HepG2 (cell line): ENCODE measurements at regions of chr7 and their contacts with region 1.

Region 1: GRCh38 chr7:157165987-157166386 is 27.3 kb downstream of the UBE3C start:
- DNase-seq: no peak
- ATAC-seq: no peak
- H3K4me3 ChIP-seq: no peak overlapping the region
- H3K27ac ChIP-seq: no peak overlapping the region
- H3K4me1 ChIP-seq: no peaks in the 10 kb centered on the region
- H3K27me3 ChIP-seq: no peaks in the 10 kb centered on the region
- CTCF ChIP-seq: no peak
- EP300 ChIP-seq: no peak
- POLR2A ChIP-seq: no peak
- RAD21 ChIP-seq: no peak

Region 2: GRCh38 chr7:157372235-157373232 is 206.5 kb after region 1 on chr7:
- CTCF ChIA-PET with region 1: no interaction called
- POLR2A ChIA-PET with region 1: no interaction called
- in situ Hi-C with region 1: no loop called
- intact Hi-C with region 1: loop called (anchors 5 kb)
- DNase-seq: no peak
- ATAC-seq: no peak; the same call in 2 of the 3 replicates
- H3K4me3 ChIP-seq: no peak overlapping the region
- H3K27ac ChIP-seq: no peak overlapping the region
- H3K4me1 ChIP-seq: no peaks in the 10 kb centered on the region
- H3K27me3 ChIP-seq: no peaks in the 10 kb centered on the region
- CTCF ChIP-seq: no peak
- EP300 ChIP-seq: no peak
- POLR2A ChIP-seq: no peak
- RAD21 ChIP-seq: no peak

Region 3: GRCh38 chr7:157760004-157760730 is 594.2 kb after region 1 on chr7:
- CTCF ChIA-PET with region 1: no interaction called
- POLR2A ChIA-PET with region 1: no interaction called
- in situ Hi-C with region 1: no loop called
- intact Hi-C with region 1: no loop called
- DNase-seq: no peak
- ATAC-seq: peak; percentile 53; the same call in 2 of the 3 replicates
- H3K4me3 ChIP-seq: no peak overlapping the region
- H3K27ac ChIP-seq: no peak overlapping the region
- H3K4me1 ChIP-seq: no peaks in the 10 kb centered on the region
- H3K27me3 ChIP-seq: no peaks in the 10 kb centered on the region; a peak in 1 of 5 replicates
- CTCF ChIP-seq: no peak; the same call in 1 of the 2 replicates
- EP300 ChIP-seq: no peak
- POLR2A ChIP-seq: no peak
- RAD21 ChIP-seq: no peak